Prostate gland (tissue), 2 donors: ENCODE measurements at regions of chr4 and their contacts with region 1.

Region 1: GRCh38 chr4:57037982-57038604 is 59.4 kb downstream of the POLR2B start:
- DNase-seq: peak; percentile 43
- H3K4me3 ChIP-seq: no peak overlapping the region
- H3K27ac ChIP-seq: no peak overlapping the region
- H3K4me1 ChIP-seq: no peaks in the 10 kb centered on the region
- H3K27me3 ChIP-seq: no peaks in the 10 kb centered on the region
- CTCF ChIP-seq: peak; percentile 33 to 72 (median 62)
- POLR2A ChIP-seq: no peak

Region 2: GRCh38 chr4:56626963-56627362 is 411.1 kb before region 1 on chr4:
- intact Hi-C with region 1: no loop called
- DNase-seq: no peak
- H3K4me3 ChIP-seq: no peak overlapping the region
- H3K27ac ChIP-seq: no peak overlapping the region
- H3K4me1 ChIP-seq: no peaks in the 10 kb centered on the region
- H3K27me3 ChIP-seq: no peaks in the 10 kb centered on the region
- CTCF ChIP-seq: no peak
- POLR2A ChIP-seq: no peak

Region 3: GRCh38 chr4:57110640-57111511 is 72.8 kb after region 1 on chr4:
- intact Hi-C with region 1: loop called (anchors 5 kb)
- DNase-seq: peak; percentile 29
- H3K4me3 ChIP-seq: peak overlapping the region; percentile 49 to 69
- H3K27ac ChIP-seq: peak overlapping the region; percentile 85 to 87
- H3K4me1 ChIP-seq: no peaks in the 10 kb centered on the region
- H3K27me3 ChIP-seq: no peaks in the 10 kb centered on the region
- CTCF ChIP-seq: no peak
- POLR2A ChIP-seq: no peak

Region 4: DNA sequence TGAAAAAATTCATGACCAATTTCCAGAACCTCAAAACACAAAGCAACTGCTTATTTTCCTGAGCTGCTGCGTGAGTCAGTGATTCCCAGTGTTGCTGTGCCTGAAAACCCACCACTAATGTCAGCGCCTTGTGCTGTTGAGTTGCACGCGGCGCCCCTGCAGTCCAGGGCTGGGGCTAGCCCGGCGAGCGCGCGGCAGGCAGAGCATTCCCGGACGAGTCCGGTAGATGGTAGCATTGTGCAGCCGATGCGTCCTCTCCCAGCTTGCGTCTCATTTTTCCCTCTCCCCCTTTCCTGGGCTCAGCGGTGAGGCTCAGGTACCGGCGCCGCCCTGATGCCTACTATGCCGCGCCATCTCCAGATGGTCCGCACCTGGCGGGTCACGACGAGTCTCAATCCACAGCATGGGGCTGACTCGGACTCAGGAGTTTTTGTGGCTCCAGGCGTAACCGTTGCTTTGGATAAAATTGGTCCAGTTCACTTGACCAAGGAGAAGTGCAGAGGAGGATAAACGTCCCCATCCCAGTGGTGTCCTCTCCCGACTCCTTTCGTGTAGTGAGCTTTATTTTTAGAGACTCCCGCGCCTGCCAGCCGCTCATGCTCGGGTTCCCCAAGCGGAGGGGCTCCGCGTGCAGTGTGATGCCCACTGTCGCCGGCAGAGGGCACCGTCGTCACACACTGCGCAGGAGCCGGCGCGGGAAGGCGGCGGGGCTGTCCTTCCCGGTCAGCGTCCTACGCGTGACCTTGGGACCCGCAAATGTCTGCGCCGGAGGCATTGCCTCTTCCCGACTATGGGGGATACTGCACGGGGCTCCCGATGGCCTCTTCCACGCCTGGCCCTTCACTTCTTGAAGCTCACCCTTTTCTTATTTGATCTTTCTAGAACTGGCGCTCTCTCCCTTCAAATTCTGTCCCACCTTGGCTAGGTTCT is 125.7 kb after region 1 on chr4:
- intact Hi-C with region 1: loop called (anchors 1 kb)
- DNase-seq: peak; percentile 66
- H3K4me3 ChIP-seq: peak overlapping the region; percentile 29 to 44
- H3K27ac ChIP-seq: peak overlapping the region; percentile 45 to 46
- H3K4me1 ChIP-seq: no peaks in the 10 kb centered on the region
- H3K27me3 ChIP-seq: no peaks in the 10 kb centered on the region
- CTCF ChIP-seq: peak; percentile 56 to 88 (median 84)
- POLR2A ChIP-seq: no peak

Region 5: DNA sequence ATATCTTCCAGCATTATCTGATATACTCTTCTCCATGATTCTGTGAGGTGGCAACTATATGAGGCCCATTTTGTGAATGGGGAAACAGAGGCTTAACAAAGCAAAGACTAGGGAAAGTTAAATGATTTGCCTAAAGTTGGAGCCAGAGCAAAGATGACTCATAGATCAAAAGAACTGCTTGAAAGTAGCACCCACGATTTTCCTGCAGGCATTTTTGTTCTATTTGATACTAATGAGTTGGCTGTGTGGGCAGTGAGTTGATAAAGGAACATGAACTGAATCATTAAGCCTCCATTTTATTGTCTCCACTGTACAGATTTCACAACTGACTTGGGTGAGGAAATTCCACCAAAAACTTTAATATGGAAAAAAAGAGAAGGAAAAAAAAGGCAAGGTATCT is 211.0 kb after region 1 on chr4:
- intact Hi-C with region 1: no loop called
- DNase-seq: no peak
- H3K4me3 ChIP-seq: no peak overlapping the region
- H3K27ac ChIP-seq: no peak overlapping the region
- H3K4me1 ChIP-seq: no peaks in the 10 kb centered on the region
- H3K27me3 ChIP-seq: no peaks in the 10 kb centered on the region
- CTCF ChIP-seq: no peak
- POLR2A ChIP-seq: no peak